Naive thymus-derived CD4-positive, alpha-beta T cell (primary cell): ENCODE measurements at regions of chr7 and their contacts with region 1.

Region 1: DNA sequence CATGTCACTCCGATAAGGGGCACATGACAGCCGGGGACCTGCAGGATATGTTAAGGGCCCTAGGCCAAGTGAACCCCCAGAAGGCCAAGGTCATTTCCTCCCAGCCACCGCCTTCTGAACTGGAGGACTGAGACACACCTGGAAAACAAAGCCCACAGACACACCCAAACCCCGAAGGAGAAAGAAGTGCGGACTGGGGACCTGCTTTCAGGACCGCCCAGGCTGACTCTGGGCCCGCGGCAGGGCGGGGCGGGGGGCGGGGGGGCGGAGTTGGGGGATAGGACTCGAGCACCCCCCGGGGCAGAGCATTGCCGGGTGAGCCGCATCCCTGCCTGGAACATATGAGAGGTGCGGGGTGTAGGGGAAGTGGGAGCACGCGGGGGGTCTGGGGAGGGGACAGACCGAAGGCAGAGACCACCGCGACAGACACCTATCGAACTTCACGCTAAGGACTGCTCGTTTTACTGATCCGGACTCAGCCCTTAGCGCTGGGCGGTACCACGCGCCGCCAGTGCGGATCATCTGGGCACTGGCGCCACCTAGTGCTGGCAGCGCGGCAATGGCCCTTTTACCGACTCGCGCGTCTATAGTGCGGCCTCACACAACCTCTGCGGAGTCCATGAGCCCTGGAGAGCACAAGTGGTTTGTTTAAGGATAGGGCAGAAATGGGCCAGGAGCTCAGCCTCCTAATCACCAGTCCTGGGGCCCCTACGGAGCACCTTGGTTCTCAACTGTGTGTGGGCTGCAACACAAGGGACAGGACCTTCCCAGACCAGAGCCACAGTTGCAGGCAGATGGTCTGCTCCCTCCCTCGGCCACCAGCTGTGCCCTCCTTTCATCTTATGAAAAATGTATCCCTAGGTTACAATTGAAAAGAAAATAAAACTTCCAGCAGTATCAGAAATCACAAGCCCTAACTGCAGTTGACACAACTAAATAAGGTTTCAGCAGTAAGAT is 157.6 kb downstream of the HERPUD2 start:
- DNase-seq: peak; percentile 51 to 82 (median 75)
- ATAC-seq: peak; percentile 98
- H3K4me3 ChIP-seq: peak overlapping the region; percentile 46
- H3K4me3 Mint-ChIP-seq: peak overlapping the region; percentile 66 to 87 (median 80)
- H3K27ac ChIP-seq: no peak overlapping the region
- H3K27ac Mint-ChIP-seq: no peak overlapping the region
- H3K4me1 ChIP-seq: no peaks in the 10 kb centered on the region
- H3K4me1 Mint-ChIP-seq: peaks cover 0 to 4% (median 0%) of the 10 kb centered on the region in 7 donors
- H3K27me3 ChIP-seq: no peaks in the 10 kb centered on the region
- H3K27me3 Mint-ChIP-seq: peaks cover 0 to 24% (median 15%) of the 10 kb centered on the region in 5 donors

Region 2: GRCh38 chr7:33961948-33962347 is 1575.4 kb before region 1 on chr7:
- CTCF ChIA-PET with region 1: no interaction called
- POLR2A ChIA-PET with region 1: no interaction called
- intact Hi-C with region 1: no loop called
- DNase-seq: no peak
- ATAC-seq: no peak
- H3K4me3 ChIP-seq: no peak overlapping the region
- H3K4me3 Mint-ChIP-seq: no peak overlapping the region
- H3K27ac ChIP-seq: no peak overlapping the region
- H3K27ac Mint-ChIP-seq: no peak overlapping the region
- H3K4me1 ChIP-seq: no peaks in the 10 kb centered on the region
- H3K4me1 Mint-ChIP-seq: no peaks in the 10 kb centered on the region
- H3K27me3 ChIP-seq: no peaks in the 10 kb centered on the region
- H3K27me3 Mint-ChIP-seq: peaks cover 0 to 33% (median 10%) of the 10 kb centered on the region in 5 donors

Region 3: GRCh38 chr7:34091323-34091917 is 1445.9 kb before region 1 on chr7:
- CTCF ChIA-PET with region 1: no interaction called
- POLR2A ChIA-PET with region 1: no interaction called
- intact Hi-C with region 1: loop called in 1 of 2 experiments (anchors 5 kb)
- DNase-seq: no peak
- ATAC-seq: no peak
- H3K4me3 ChIP-seq: no peak overlapping the region
- H3K4me3 Mint-ChIP-seq: no peak overlapping the region
- H3K27ac ChIP-seq: no peak overlapping the region
- H3K27ac Mint-ChIP-seq: no peak overlapping the region
- H3K4me1 ChIP-seq: no peaks in the 10 kb centered on the region
- H3K4me1 Mint-ChIP-seq: no peaks in the 10 kb centered on the region
- H3K27me3 ChIP-seq: no peaks in the 10 kb centered on the region
- H3K27me3 Mint-ChIP-seq: peaks cover 0 to 6% (median 0%) of the 10 kb centered on the region in 5 donors

Region 4: GRCh38 chr7:35555934-35556333 is 18.6 kb after region 1 on chr7:
- CTCF ChIA-PET with region 1: no interaction called
- POLR2A ChIA-PET with region 1: no interaction called
- intact Hi-C with region 1: no loop called
- DNase-seq: no peak
- ATAC-seq: no peak
- H3K4me3 ChIP-seq: no peak overlapping the region
- H3K4me3 Mint-ChIP-seq: no peak overlapping the region
- H3K27ac ChIP-seq: no peak overlapping the region
- H3K27ac Mint-ChIP-seq: no peak overlapping the region
- H3K4me1 ChIP-seq: no peaks in the 10 kb centered on the region
- H3K4me1 Mint-ChIP-seq: no peaks in the 10 kb centered on the region
- H3K27me3 ChIP-seq: no peaks in the 10 kb centered on the region
- H3K27me3 Mint-ChIP-seq: peaks cover 0 to 15% (median 7%) of the 10 kb centered on the region in 5 donors

Region 5: DNA sequence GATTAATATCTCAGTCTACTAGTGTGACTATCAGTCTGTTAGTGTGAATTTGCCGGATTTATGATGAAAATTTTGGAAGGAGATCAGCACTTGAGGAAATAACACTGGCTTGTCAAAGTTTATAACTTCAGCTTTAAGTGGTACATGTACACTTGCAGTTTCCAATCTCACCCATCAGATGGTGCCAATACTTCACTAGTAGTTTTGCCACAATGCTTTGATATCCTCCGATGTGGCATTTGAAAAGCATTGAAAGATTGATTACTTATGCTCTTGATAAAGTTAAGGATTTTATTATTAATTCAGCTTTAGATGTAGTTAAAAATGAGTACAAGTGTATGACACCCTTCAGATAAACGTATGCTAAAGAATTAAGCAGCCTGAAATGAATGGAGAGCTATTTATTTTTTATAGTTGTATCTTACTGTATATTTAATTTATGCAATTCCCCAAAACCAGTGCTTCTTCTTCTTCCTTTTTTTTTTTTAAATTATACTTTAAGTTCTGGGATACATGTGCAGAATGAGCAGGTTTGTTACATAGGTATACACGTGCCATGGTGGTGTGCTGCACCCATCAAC is 950.5 kb after region 1 on chr7:
- CTCF ChIA-PET with region 1: no interaction called
- POLR2A ChIA-PET with region 1: no interaction called
- intact Hi-C with region 1: no loop called
- DNase-seq: peak in 7 of 9 donors; percentile 47 to 72 (median 61)
- ATAC-seq: peak; percentile 78
- H3K4me3 ChIP-seq: no peak overlapping the region
- H3K4me3 Mint-ChIP-seq: no peak overlapping the region
- H3K27ac ChIP-seq: no peak overlapping the region
- H3K27ac Mint-ChIP-seq: peak overlapping the region in 1 of 9 donors; percentile 81
- H3K4me1 ChIP-seq: no peaks in the 10 kb centered on the region
- H3K4me1 Mint-ChIP-seq: peaks cover 0 to 9% (median 3%) of the 10 kb centered on the region in 7 donors
- H3K27me3 ChIP-seq: no peaks in the 10 kb centered on the region
- H3K27me3 Mint-ChIP-seq: peaks cover 0 to 22% (median 0%) of the 10 kb centered on the region in 5 donors